ENCODE measurements at regions of chr9 and their contacts with region 1.

Region 1: DNA sequence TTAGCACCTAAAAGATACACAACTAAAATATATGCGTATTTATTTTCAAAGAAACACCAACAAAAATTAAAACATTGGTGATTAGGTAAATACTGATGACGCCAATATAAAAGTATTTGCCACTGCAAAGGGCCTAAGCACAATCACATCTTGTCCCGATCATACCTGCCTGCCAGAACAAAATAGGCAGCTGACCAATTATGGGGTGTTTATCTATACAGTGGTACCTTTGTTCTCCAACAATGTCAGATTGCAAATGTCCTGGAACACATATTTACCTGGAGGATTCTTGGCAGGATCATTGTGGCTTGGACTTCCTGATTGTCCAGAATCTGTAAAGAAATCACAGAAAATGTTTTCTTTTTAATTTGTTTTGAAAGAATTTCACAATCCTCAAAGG is 134.5 kb downstream of the NFIB start:
- DNase-seq: peak; percentile 24 to 85
- H3K4me3 ChIP-seq: no peak overlapping the region
- H3K27ac ChIP-seq: peak overlapping the region; percentile 39
- H3K4me1 ChIP-seq: peaks cover 19% of the 10 kb centered on the region
- H3K27me3 ChIP-seq: no peaks in the 10 kb centered on the region
- CTCF ChIP-seq: no peak

Region 2: GRCh38 chr9:14251154-14252071 is 72.0 kb after region 1 on chr9:
- CTCF ChIA-PET with region 1: no interaction called
- POLR2A ChIA-PET with region 1: no interaction called
- intact Hi-C with region 1: loop called (anchors 5 kb)
- DNase-seq: peak; percentile 81 to 96
- H3K4me3 ChIP-seq: peak overlapping the region; percentile 47; the same call in 1 of the 2 replicates
- H3K27ac ChIP-seq: peak overlapping the region; percentile 98
- H3K4me1 ChIP-seq: peaks cover 60% of the 10 kb centered on the region
- H3K27me3 ChIP-seq: no peaks in the 10 kb centered on the region
- CTCF ChIP-seq: no peak

Region 3: DNA sequence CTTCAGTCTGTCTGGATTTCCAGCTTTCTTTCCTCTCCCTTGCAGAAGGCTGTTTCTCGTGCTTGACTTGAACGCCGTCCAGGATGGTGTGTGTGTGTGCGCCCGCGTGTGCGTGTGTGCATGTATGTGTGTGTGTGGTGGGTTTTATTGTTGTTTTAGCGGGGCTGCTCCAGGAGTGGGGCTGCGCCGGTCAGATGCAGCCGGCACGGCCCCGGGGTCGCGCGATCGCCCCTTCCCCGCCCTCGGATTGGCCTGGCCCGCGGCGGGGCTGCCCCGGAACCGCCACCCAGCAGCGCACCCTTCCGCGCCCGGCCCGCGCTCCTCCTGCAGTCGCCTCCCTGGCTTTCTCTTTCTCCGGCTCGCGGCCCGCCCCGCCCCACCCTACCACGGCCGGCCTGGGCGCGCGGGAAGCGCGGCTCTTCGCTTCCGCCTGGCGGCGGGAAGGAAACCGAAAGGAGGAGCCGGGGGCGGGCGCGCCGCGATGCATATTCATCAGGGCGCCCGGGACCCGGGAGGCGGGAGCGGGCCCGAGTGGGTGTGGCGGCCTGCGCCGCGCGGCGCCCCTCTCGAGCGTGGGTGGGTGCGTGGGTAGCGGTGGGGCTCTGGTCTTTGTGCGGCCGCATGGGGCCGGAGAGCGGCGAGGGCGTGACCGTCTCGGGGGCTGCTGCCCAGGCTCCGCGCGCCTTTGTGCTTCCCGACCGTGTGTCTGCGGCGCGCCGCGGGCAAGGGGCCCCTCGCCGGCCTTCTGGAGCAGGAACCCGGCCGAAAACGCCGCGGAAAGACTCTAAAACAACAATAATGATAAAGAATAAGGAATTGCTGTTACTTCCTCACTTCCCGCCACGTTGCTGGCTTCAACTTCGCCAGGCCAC is 143.0 kb after region 1 on chr9:
- CTCF ChIA-PET with region 1: no interaction called
- POLR2A ChIA-PET with region 1: interaction called, 13 read pairs
- intact Hi-C with region 1: no loop called
- DNase-seq: peak; percentile 72 to 85
- H3K4me3 ChIP-seq: peak overlapping the region; percentile 73
- H3K27ac ChIP-seq: peak overlapping the region; percentile 92
- H3K4me1 ChIP-seq: peaks cover 59% of the 10 kb centered on the region
- H3K27me3 ChIP-seq: no peaks in the 10 kb centered on the region
- CTCF ChIP-seq: no peak; the same call in 1 of the 2 replicates